T-cell (primary cell): ENCODE measurements at regions of chr10 and their contacts with region 1.

Region 1: GRCh38 chr10:72088889-72089575 is 681 bp upstream of the SPOCK2 start:
- DNase-seq: peak in 34 of 35 experiments; percentile 35 to 78 (median 58)
- ATAC-seq: peak; percentile 35 to 58 (median 43)
- H3K4me3 ChIP-seq: peak overlapping the region; percentile 77 to 98
- H3K4me3 Mint-ChIP-seq: peak overlapping the region; percentile 96 to 100 (median 99)
- H3K27ac ChIP-seq: peak overlapping the region; percentile 97
- H3K27ac Mint-ChIP-seq: peak overlapping the region; percentile 99 to 100
- H3K4me1 ChIP-seq: peaks cover 35 to 51% of the 10 kb centered on the region in 2 experiments
- H3K4me1 Mint-ChIP-seq: peaks cover 48 to 54% (median 52%) of the 10 kb centered on the region in 3 donors
- H3K27me3 ChIP-seq: no peaks in the 10 kb centered on the region
- H3K27me3 Mint-ChIP-seq: no peaks in the 10 kb centered on the region

Region 2: GRCh38 chr10:71343392-71343773 is 745.6 kb before region 1 on chr10:
- CTCF ChIA-PET with region 1: no interaction called
- POLR2A ChIA-PET with region 1: no interaction called
- DNase-seq: no peak
- ATAC-seq: no peak
- H3K4me3 ChIP-seq: no peak overlapping the region
- H3K4me3 Mint-ChIP-seq: no peak overlapping the region
- H3K27ac ChIP-seq: no peak overlapping the region
- H3K27ac Mint-ChIP-seq: no peak overlapping the region
- H3K4me1 ChIP-seq: no peaks in the 10 kb centered on the region
- H3K4me1 Mint-ChIP-seq: no peaks in the 10 kb centered on the region
- H3K27me3 ChIP-seq: no peaks in the 10 kb centered on the region
- H3K27me3 Mint-ChIP-seq: no peaks in the 10 kb centered on the region

Region 3: DNA sequence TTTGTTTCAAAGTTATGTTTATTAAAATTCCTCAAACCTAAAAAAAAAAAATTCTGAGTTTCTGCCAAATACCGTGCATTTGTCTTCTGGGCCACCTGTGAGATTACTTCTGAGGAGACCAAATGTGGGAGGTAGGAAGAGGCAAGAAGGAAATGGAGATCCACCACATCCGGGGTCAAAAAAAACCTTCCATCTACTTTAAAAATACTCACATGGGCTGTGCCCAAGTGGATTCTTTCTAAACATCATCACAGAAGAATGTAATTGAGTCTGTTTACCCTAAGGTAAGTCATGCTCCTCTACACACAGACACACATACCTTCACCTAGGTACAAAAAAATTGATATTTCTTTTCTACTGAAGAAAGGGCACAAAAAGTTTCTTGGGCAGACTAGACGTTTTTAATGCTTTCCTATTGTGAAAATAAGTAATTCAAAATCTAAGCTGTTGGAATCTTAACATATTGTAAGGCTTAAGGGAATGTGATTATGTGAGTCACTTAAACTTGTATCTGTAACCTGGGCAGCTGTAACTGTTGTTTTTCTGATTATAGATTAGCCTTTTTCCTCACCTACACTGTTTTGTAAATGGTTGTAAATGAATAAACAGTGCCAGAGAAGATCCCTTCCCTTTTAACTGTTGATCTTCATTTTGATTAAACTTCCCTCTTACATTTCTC is 18.4 kb after region 1 on chr10:
- CTCF ChIA-PET with region 1: interaction called in 1 of 2 experiments, 5 read pairs
- POLR2A ChIA-PET with region 1: interaction called, 4 to 10 read pairs
- DNase-seq: peak in 10 of 35 experiments; percentile 11 to 77 (median 32)
- ATAC-seq: peak; percentile 75 to 88 (median 86)
- H3K4me3 ChIP-seq: peak overlapping the region in 1 of 2 donors; percentile 15
- H3K4me3 Mint-ChIP-seq: peak overlapping the region; percentile 62 to 74 (median 67)
- H3K27ac ChIP-seq: peak overlapping the region; percentile 53
- H3K27ac Mint-ChIP-seq: peak overlapping the region; percentile 92 to 94
- H3K4me1 ChIP-seq: peaks cover 59 to 72% of the 10 kb centered on the region in 2 experiments
- H3K4me1 Mint-ChIP-seq: peaks cover 84 to 88% (median 84%) of the 10 kb centered on the region in 3 donors
- H3K27me3 ChIP-seq: no peaks in the 10 kb centered on the region
- H3K27me3 Mint-ChIP-seq: no peaks in the 10 kb centered on the region